Ascending aorta (tissue), 2 donors: ENCODE measurements at regions of chr1 and their contacts with region 1.

Region 1: GRCh38 chr1:115337633-115338456 is at the start of gene NGF:
- DNase-seq: peak; percentile 29 to 89
- H3K4me3 ChIP-seq: peak within 1 kb of the TSS; percentile 56 to 69
- H3K27ac ChIP-seq: peak within 1 kb of the TSS; percentile 87 to 89
- H3K4me1 ChIP-seq: peaks cover 9 to 33% of the 10 kb centered on the region in 2 donors
- H3K27me3 ChIP-seq: no peaks in the 10 kb centered on the region
- CTCF ChIP-seq: no peak
- total RNA-seq, gene NGF: 2.1 TPM

Region 2: GRCh38 chr1:115068826-115069572 is 268.8 kb before region 1 on chr1:
- intact Hi-C with region 1: loop called (anchors 5 kb)
- DNase-seq: peak; percentile 46 to 83
- H3K4me3 ChIP-seq: no peak overlapping the region
- H3K27ac ChIP-seq: peak overlapping the region; percentile 84 to 86
- H3K4me1 ChIP-seq: peaks cover 12 to 50% of the 10 kb centered on the region in 2 donors
- H3K27me3 ChIP-seq: no peaks in the 10 kb centered on the region
- CTCF ChIP-seq: peak in 1 of 3 experiments; percentile 23

Region 3: GRCh38 chr1:115189814-115190539 is 147.9 kb before region 1 on chr1:
- intact Hi-C with region 1: loop called (anchors 2 kb)
- DNase-seq: peak in 1 of 2 donors; percentile 71
- H3K4me3 ChIP-seq: no peak overlapping the region
- H3K27ac ChIP-seq: peak overlapping the region; percentile 89 to 95
- H3K4me1 ChIP-seq: peaks cover 15 to 34% of the 10 kb centered on the region in 2 donors
- H3K27me3 ChIP-seq: no peaks in the 10 kb centered on the region
- CTCF ChIP-seq: no peak

Region 4: DNA sequence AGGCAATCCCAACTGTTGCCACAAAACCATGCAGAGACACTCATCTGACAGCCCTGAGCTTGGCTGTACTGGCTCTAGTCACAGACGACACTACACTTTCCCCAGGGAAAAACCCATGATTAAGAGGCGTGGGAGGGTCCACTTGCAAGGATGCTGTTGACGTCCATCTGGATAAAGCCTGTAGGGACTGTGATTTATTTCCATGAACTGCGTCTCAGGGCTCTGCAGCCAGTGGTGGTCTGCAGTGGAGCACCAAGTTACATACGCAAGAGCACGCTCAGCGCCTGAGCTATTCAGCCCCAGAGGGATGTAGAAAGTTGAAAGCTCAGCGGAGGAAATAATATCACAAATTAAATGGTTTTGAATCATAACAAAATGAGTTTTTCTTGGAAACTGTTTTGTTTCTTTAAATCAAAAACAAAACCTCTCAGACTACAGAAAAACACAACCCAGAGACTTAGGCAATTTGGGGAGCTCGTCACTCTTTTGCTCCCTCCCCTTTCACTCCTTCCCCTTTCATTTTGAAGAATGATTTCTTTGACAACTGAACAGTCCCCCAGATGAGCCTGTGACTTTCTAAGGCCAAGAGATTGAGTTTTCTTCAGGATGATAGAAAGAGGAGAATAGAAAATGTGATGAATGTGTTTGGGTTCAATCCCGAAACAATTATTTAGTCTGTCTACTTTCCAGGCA is 71.0 kb before region 1 on chr1:
- intact Hi-C with region 1: no loop called
- DNase-seq: no peak
- H3K4me3 ChIP-seq: peak overlapping the region in 1 of 2 donors; percentile 47
- H3K27ac ChIP-seq: no peak overlapping the region
- H3K4me1 ChIP-seq: no peaks in the 10 kb centered on the region
- H3K27me3 ChIP-seq: no peaks in the 10 kb centered on the region
- CTCF ChIP-seq: no peak

Region 5: DNA sequence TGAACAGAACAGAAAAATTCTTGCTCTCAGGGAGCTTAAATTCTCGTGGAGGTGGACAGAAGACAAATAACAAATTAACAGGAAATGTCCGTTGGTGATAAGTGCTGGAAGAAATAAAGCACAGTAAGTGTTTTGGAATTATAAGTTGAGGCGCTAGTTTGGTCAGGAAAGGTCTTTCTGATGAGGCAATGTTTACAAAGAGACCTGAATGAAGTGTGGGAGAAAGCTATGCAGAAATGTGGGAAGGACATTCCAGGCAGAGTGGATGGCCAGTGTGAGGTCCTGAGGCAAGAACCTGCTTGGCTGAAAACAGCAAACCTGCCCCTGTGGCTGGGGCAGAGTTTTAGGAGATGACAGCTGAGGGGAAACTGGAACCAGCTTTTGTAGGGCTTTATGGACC is 23.1 kb before region 1 on chr1:
- intact Hi-C with region 1: loop called (anchors 2 kb)
- DNase-seq: peak in 1 of 2 donors; percentile 70
- H3K4me3 ChIP-seq: no peak overlapping the region
- H3K27ac ChIP-seq: peak overlapping the region; percentile 78 to 80
- H3K4me1 ChIP-seq: peaks cover 5 to 19% of the 10 kb centered on the region in 2 donors
- H3K27me3 ChIP-seq: no peaks in the 10 kb centered on the region
- CTCF ChIP-seq: no peak

Region 6: GRCh38 chr1:115402753-115403184 is 64.9 kb after region 1 on chr1:
- intact Hi-C with region 1: no loop called
- DNase-seq: no peak
- H3K4me3 ChIP-seq: no peak overlapping the region
- H3K27ac ChIP-seq: no peak overlapping the region
- H3K4me1 ChIP-seq: no peaks in the 10 kb centered on the region
- H3K27me3 ChIP-seq: no peaks in the 10 kb centered on the region
- CTCF ChIP-seq: no peak

Region 7: DNA sequence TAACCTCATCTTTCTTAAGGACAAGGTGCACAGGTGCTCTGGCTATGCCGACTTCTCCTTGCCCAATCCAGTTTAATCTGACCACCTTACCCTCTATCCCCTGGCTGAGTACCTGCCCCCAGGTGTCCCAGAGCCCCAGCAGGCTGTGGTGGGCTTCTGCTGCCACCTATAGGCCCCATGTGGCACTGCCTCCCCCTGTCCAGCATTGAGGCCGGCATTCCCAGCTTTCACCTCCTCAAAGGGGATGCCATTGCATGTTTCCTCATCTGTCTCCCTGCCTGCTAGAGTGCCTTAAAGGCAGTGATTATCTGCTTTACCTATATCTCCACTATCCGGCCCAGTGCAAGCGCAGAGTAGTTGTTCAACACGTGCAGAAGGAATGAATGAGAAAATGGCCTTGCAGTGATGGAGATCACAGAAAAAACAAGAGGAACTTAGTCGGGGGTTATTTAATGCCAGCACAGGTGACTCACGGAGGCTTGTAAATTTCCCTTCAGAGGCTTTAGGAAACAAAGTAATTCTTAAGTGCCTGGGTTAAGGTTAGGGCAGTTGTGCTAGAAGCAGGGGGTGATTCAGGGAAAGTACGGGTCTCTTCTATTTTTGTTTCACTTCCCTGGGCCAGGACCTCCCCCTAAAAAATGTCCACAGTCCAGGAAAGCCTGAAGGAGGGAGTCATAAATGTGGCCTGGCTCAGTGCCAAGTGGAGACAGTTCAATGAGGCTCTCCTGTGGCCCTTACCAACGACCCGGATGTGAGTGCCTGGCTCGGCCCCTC is 132.0 kb after region 1 on chr1:
- intact Hi-C with region 1: loop called (anchors 10 kb)
- DNase-seq: no peak
- H3K4me3 ChIP-seq: no peak overlapping the region
- H3K27ac ChIP-seq: no peak overlapping the region
- H3K4me1 ChIP-seq: no peaks in the 10 kb centered on the region
- H3K27me3 ChIP-seq: no peaks in the 10 kb centered on the region
- CTCF ChIP-seq: peak; percentile 73 to 90 (median 81)

Region 8: DNA sequence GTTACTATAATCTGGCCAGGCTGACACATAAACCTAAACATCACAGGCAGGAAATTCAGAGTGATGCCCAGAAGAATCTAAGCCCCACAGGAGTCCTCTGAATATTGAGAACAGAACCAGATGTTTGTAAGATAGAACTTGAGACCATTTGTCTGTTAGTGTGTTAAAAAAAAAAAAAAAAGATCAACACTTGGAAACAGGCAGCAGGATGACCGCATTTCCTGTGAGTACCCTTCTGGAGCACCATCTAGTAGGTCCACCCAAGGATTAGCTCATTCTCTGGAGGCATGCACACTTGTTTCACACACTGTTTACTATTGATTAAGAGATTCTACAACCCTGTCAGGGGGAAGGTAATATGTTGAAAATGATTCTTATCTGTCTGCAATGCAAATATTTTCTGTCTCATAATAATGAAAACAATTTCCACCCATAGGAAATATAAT is 192.6 kb after region 1 on chr1:
- intact Hi-C with region 1: no loop called
- DNase-seq: no peak
- H3K4me3 ChIP-seq: no peak overlapping the region
- H3K27ac ChIP-seq: no peak overlapping the region
- H3K4me1 ChIP-seq: no peaks in the 10 kb centered on the region
- H3K27me3 ChIP-seq: no peaks in the 10 kb centered on the region
- CTCF ChIP-seq: no peak

Region 9: GRCh38 chr1:116372587-116373444 is 1035.0 kb after region 1 on chr1 and contains the start of gene ATP1A1:
- intact Hi-C with region 1: loop called (anchors 10 kb)
- DNase-seq: peak; percentile 94 to 98
- H3K4me3 ChIP-seq: peak within 1 kb of the TSS; percentile 78 to 81
- H3K27ac ChIP-seq: peak within 1 kb of the TSS; percentile 95 to 96
- H3K4me1 ChIP-seq: peaks cover 17 to 36% of the 10 kb centered on the region in 2 donors
- H3K27me3 ChIP-seq: no peaks in the 10 kb centered on the region
- CTCF ChIP-seq: no peak
- total RNA-seq, gene ATP1A1: 255 TPM